ENCODE measurements at regions of chr7 and their contacts with region 1.

Region 1: DNA sequence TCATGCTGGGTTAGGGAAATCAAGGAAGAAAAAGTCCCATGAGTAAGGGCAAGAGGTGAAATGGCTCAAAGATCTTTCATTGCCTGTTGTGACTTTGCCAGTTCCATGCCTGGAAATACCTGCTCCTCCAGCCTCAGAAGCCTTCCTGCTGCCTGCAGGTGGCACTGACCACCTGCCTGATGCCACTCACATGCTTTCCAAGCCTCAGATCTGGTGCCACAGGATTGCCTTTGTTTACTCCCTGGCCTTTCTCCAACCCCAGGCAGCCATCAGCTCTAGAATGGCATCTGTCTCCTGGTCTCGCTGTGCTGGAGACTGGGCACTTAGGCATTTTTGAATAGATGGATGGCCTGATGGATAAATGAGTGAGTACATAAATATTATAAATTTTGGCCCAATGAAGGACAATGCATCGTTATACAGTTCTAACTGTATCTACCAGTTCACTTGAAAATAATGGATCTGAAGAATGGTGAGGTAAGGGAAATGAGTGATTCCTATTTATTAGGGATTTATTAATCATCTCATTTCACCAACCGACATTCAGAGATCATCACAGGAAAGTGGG is 657.2 kb downstream of the INHBA start:
- DNase-seq: peak; percentile 86
- H3K4me3 Mint-ChIP-seq: no peak overlapping the region
- H3K27ac Mint-ChIP-seq: peak overlapping the region; percentile 66
- H3K4me1 Mint-ChIP-seq: peaks cover 54% of the 10 kb centered on the region
- H3K27me3 Mint-ChIP-seq: no peaks in the 10 kb centered on the region
- CTCF ChIP-seq: peak; percentile 88

Region 2: GRCh38 chr7:40232242-40232893 is 813.3 kb before region 1 on chr7:
- CTCF ChIA-PET with region 1: interaction called, 4 read pairs
- intact Hi-C with region 1: loop called (anchors 10 kb)
- DNase-seq: peak; percentile 57
- H3K4me3 Mint-ChIP-seq: no peak overlapping the region
- H3K27ac Mint-ChIP-seq: no peak overlapping the region
- H3K4me1 Mint-ChIP-seq: peaks cover 9% of the 10 kb centered on the region
- H3K27me3 Mint-ChIP-seq: no peaks in the 10 kb centered on the region
- CTCF ChIP-seq: peak; percentile 62

Region 3: DNA sequence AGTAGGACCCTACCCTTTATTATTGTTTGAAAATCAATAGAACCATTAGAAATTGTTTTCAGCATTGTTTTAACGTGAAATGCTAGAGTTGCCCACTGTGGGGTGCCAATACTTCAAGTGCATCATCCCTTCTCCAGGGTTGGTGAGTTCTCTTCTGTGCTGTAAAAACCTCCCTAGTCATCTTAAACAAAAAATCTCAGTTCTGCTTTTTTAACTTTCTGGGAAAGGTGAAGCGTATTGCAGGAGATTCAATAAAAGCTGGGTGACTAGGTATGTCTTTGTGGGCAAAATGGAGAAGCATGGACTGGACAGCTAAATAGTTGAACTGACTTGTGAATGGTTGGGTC is 211.8 kb before region 1 on chr7:
- CTCF ChIA-PET with region 1: no interaction called
- intact Hi-C with region 1: loop called (anchors 5 kb)
- DNase-seq: peak; percentile 24
- H3K4me3 Mint-ChIP-seq: no peak overlapping the region
- H3K27ac Mint-ChIP-seq: no peak overlapping the region
- H3K4me1 Mint-ChIP-seq: peaks cover 6% of the 10 kb centered on the region
- H3K27me3 Mint-ChIP-seq: no peaks in the 10 kb centered on the region
- CTCF ChIP-seq: no peak

Region 4: DNA sequence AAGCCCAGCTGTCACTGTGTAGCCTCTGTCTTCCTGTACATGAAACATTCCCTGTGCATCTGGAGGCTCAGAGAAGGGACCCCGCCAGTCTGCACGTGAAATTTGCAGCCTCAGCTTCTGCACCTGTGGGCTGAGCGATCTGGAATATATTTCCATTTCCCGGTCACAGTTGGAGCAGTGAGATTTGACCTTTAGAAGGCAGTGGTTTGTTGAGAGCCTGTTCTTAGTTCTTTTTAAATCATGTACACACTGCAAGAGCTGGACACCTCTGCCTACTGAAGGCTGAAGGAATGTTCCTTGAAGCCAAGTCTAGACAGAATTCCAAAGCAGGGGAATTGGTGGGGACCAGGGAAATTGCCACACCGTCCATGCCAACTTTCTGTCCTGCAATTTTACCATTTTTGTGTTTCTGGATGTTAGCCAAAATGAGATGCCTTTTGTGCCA is 49.4 kb before region 1 on chr7:
- CTCF ChIA-PET with region 1: no interaction called
- intact Hi-C with region 1: no loop called
- DNase-seq: no peak
- H3K4me3 Mint-ChIP-seq: no peak overlapping the region
- H3K27ac Mint-ChIP-seq: peak overlapping the region; percentile 4
- H3K4me1 Mint-ChIP-seq: peaks cover 30% of the 10 kb centered on the region
- H3K27me3 Mint-ChIP-seq: no peaks in the 10 kb centered on the region
- CTCF ChIP-seq: no peak

Region 5: DNA sequence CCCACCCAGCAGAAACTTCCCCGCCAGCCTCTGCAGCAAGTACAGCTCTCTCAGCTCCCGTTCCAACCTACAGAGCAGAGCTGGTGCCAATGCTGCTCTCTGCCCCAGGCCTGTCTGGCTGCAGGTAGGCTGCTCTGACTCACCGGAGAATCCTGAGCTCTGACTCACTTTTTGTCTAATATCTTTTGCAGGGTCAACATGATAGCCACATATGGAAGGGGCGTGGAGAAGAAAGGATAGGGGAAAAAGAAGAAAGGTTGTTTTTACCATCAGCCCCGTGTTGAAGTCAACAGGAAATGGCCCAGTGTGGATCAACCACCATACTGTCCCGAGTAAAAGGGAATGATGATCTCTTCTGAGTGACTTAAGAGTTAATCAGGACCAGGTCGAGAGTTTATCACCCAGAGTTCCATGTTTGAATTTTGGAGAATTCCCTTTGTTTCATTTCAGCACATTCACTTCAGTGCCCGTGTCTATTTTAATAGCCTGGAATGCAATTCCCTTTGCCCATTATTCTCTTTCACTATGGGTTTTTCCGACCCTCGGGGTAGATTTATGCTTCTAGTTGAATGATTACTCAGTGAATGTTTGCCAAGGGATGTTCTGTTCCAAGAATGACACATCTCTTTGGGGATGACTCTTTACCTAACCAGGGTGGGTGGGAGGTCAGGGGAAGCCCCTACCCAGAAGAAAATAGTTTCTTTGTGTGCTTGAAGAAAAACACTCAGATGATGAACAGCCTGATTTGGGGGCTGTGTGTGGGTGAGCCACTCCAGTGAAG is 62.2 kb after region 1 on chr7:
- CTCF ChIA-PET with region 1: no interaction called
- intact Hi-C with region 1: loop called (anchors 1 kb)
- DNase-seq: peak; percentile 91
- H3K4me3 Mint-ChIP-seq: peak overlapping the region; percentile 53
- H3K27ac Mint-ChIP-seq: peak overlapping the region; percentile 96
- H3K4me1 Mint-ChIP-seq: peaks cover 70% of the 10 kb centered on the region
- H3K27me3 Mint-ChIP-seq: no peaks in the 10 kb centered on the region
- CTCF ChIP-seq: no peak

Region 6: DNA sequence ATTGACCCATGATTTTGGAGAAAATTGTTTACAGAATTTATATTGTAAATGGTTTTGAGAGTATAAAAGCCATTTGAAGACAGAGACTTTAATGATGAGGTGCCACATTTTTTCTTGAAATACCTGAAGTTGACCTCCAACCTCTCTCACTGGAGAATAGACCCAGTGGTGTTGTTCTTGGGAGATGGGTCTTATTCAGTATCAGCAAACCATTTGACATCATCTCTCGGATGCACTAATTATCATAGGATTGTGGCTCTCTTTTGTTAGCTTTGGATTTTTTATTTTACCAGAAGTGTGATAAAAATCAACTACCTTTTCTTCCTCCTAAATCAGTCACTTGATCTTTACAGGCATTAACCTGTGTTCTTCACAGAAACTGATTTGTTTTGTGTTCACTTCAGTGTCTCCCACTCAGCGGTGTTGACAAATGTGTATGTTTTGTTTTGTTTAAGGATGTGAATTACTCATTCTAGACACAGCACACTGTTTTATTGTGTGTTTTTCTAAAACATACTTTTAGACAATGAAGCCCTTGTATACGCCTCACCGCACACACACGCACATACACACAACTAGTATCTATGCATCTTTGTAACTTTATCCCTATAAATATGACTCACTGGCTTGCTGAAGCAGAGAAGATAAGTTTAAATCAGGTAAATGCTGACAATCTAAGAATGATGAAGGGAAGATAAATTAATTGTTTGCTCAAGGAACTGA is 201.7 kb after region 1 on chr7:
- CTCF ChIA-PET with region 1: no interaction called
- intact Hi-C with region 1: loop called (anchors 1 kb)
- DNase-seq: peak; percentile 69
- H3K4me3 Mint-ChIP-seq: peak overlapping the region; percentile 22
- H3K27ac Mint-ChIP-seq: peak overlapping the region; percentile 96
- H3K4me1 Mint-ChIP-seq: peaks cover 42% of the 10 kb centered on the region
- H3K27me3 Mint-ChIP-seq: no peaks in the 10 kb centered on the region
- CTCF ChIP-seq: no peak

Region 7: GRCh38 chr7:41261080-41261479 is 215.4 kb after region 1 on chr7:
- CTCF ChIA-PET with region 1: no interaction called
- intact Hi-C with region 1: no loop called
- DNase-seq: no peak
- H3K4me3 Mint-ChIP-seq: no peak overlapping the region
- H3K27ac Mint-ChIP-seq: no peak overlapping the region
- H3K4me1 Mint-ChIP-seq: peaks cover 3% of the 10 kb centered on the region
- H3K27me3 Mint-ChIP-seq: no peaks in the 10 kb centered on the region
- CTCF ChIP-seq: no peak

Region 8: DNA sequence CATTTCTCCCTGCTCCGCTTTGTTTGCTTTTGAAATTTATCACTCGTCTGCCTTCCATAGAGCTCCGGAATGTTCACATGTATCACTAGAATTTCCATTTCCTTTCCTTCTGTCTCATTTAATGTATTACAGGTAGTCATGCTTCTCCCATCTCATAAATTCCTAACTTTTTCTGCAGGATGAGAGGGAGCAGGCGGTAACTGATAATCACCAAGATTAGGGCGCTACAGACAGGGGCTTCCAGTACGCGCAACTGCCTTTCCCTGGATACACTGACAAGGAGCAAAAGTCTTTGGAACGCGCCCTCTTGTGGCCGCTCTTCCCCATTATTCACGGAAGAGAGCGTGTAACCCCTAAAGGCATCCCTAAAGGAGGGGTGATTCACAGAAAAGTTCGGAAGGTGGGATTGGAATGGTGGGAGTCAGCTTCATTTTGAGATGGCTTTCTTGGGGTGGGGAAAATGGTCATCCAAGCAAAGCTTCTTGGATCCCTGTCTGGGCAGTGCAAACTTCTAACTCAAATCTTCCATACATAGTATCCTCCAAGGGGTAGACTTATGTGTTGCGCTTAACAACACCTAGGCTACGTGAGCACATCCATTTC is 650.8 kb after region 1 on chr7:
- CTCF ChIA-PET with region 1: interaction called, 14 read pairs
- intact Hi-C with region 1: loop called (anchors 1 kb)
- DNase-seq: peak; percentile 86
- H3K4me3 Mint-ChIP-seq: peak overlapping the region; percentile 87
- H3K27ac Mint-ChIP-seq: peak overlapping the region; percentile 66
- H3K4me1 Mint-ChIP-seq: peaks cover 63% of the 10 kb centered on the region
- H3K27me3 Mint-ChIP-seq: no peaks in the 10 kb centered on the region
- CTCF ChIP-seq: peak; percentile 96

Measured in Calu3 (cell line).